WTC11 (cell line): ENCODE measurements at regions of chr3 and their contacts with region 1.

Region 1: DNA sequence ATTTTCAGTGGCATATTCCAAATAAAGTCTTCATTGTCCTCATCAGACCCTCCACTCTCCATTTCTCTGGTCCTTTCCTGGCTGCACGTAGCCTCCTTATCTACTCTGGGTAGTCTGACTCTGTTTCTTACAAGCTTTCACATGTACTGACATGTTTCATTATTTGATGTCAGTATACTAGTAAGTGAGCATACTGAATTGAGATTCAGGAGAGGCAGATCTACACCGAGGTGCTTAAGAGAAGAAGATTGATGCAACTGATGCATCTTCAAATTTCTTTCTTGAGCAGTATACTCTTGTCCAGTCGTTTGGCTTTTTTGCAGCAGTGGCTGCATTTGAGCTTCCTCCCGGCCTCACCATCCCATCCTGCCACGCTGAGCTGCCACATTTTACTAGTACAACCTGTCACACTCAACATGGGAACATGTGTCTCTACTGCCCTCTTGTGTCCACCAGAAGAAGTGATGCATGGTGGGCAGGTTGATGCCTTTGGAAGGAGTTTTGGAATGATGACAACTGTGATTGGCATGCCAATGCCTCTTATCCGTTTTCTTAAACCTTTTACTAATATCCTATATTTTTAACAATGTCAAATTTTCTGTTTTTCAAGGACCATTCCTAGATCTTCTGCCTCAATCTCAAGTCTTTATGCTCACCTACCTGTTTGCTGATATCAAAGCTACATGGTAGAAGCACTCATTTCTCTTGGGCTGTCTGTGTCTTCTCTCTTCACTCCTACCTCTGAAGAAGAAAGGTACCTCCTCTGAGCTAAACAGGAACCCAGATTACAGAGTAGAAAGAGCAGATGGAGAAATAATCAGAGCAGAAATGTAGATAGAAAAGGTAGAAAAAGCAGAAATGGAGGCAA is 38.7 kb downstream of the GUCA1C start:
- DNase-seq: peak; percentile 64
- ATAC-seq: peak; percentile 99
- H3K4me3 Mint-ChIP-seq: no peak overlapping the region
- H3K27ac Mint-ChIP-seq: no peak overlapping the region
- H3K4me1 Mint-ChIP-seq: peaks cover 6% of the 10 kb centered on the region
- H3K27me3 Mint-ChIP-seq: no peaks in the 10 kb centered on the region
- CTCF ChIP-seq: peak; percentile 81

Region 2: DNA sequence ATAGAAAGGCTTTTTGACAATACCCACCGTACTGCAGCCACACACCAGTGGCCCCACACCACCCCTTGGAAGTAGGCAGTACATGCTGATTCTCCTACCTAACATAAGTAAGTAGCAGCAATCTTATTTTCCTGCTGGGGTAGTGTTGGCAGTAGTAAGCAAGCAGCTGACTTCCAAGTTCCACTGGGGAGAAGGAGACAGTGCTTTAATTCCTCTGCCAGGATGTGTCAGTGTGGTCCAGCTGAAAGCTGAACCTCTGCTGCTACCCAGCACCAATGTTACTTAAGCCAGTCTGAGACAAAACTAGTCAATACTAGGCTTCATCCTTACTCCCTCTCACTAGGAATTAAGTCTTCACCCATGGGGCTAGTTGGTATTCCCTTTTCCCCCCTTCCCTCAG is 250.7 kb before region 1 on chr3:
- CTCF ChIA-PET with region 1: interaction called, 16 read pairs
- POLR2A ChIA-PET with region 1: no interaction called
- DNase-seq: no peak
- ATAC-seq: peak; percentile 39
- H3K4me3 Mint-ChIP-seq: no peak overlapping the region
- H3K27ac Mint-ChIP-seq: peak overlapping the region; percentile 24; the same call in 1 of the 2 replicates
- H3K4me1 Mint-ChIP-seq: peaks cover 14% of the 10 kb centered on the region
- H3K27me3 Mint-ChIP-seq: no peaks in the 10 kb centered on the region
- CTCF ChIP-seq: no peak